GM13977 (cell line): ENCODE measurements at regions of chr11 and their contacts with region 1.

Region 1: GRCh38 chr11:18526521-18527296 is at the start of gene TSG101:
- DNase-seq: peak; percentile 92
- CTCF ChIP-seq: no peak

Region 2: GRCh38 chr11:18731949-18732821 is 205.5 kb after region 1 on chr11:
- in situ Hi-C with region 1: loop called (anchors 25 kb)
- DNase-seq: peak; percentile 84
- CTCF ChIP-seq: peak; percentile 94